WTC11 (cell line): ENCODE measurements at regions of chr12 and their contacts with region 1.

Region 1: GRCh38 chr12:54398995-54399793 is 14.7 kb upstream of the ZNF385A start:
- DNase-seq: peak; percentile 94
- ATAC-seq: peak; percentile 94
- H3K4me3 Mint-ChIP-seq: no peak overlapping the region
- H3K27ac Mint-ChIP-seq: no peak overlapping the region
- H3K4me1 Mint-ChIP-seq: peaks cover under 1% of the 10 kb centered on the region
- H3K27me3 Mint-ChIP-seq: peaks cover under 1% of the 10 kb centered on the region
- CTCF ChIP-seq: peak; percentile 99

Region 2: GRCh38 chr12:54187069-54187468 is 212.1 kb before region 1 on chr12:
- CTCF ChIA-PET with region 1: no interaction called
- POLR2A ChIA-PET with region 1: no interaction called
- DNase-seq: no peak
- ATAC-seq: no peak
- H3K4me3 Mint-ChIP-seq: peak overlapping the region; percentile 79
- H3K27ac Mint-ChIP-seq: no peak overlapping the region
- H3K4me1 Mint-ChIP-seq: peaks cover 14% of the 10 kb centered on the region
- H3K27me3 Mint-ChIP-seq: peaks cover 29% of the 10 kb centered on the region
- CTCF ChIP-seq: no peak

Region 3: DNA sequence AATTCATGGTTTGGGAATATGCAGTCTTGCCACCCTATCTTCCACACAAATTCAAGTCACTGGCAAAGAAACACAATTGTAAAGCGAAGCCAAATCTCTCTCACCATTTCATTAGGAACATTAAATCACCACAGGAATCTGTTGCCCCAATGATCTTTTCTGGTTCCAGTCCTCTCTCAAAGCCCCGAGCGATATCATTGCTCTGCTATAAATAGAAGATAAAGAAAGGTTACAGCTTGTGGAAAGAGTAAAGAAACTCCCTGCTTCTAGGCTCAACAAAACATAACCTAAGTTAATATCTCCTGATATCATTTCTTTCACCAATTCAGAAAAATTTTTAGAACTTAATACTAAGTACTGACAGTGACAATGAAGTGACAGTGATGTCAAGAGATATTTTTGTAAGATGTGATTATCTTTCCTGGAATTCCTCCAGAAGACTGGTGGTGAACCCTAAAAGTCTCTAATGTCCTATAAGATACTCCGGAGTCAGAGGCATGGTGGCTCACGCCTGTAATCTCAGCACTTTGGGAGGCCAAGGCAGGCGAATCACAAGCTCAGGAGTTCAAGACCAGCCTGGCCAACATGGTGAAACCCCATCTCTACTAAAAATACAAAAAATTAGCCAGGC is 153.1 kb before region 1 on chr12:
- CTCF ChIA-PET with region 1: no interaction called
- POLR2A ChIA-PET with region 1: no interaction called
- DNase-seq: no peak
- ATAC-seq: no peak
- H3K4me3 Mint-ChIP-seq: no peak overlapping the region
- H3K27ac Mint-ChIP-seq: no peak overlapping the region
- H3K4me1 Mint-ChIP-seq: no peaks in the 10 kb centered on the region
- H3K27me3 Mint-ChIP-seq: no peaks in the 10 kb centered on the region
- CTCF ChIP-seq: no peak

Region 4: GRCh38 chr12:54352022-54352531 is 47.1 kb before region 1 on chr12:
- CTCF ChIA-PET with region 1: interaction called, 13 read pairs
- POLR2A ChIA-PET with region 1: no interaction called
- DNase-seq: peak; percentile 70
- ATAC-seq: peak; percentile 55
- H3K4me3 Mint-ChIP-seq: peak overlapping the region; percentile 87
- H3K27ac Mint-ChIP-seq: peak overlapping the region; percentile 92
- H3K4me1 Mint-ChIP-seq: peaks cover 47% of the 10 kb centered on the region
- H3K27me3 Mint-ChIP-seq: peaks cover 18% of the 10 kb centered on the region
- CTCF ChIP-seq: no peak

Region 5: DNA sequence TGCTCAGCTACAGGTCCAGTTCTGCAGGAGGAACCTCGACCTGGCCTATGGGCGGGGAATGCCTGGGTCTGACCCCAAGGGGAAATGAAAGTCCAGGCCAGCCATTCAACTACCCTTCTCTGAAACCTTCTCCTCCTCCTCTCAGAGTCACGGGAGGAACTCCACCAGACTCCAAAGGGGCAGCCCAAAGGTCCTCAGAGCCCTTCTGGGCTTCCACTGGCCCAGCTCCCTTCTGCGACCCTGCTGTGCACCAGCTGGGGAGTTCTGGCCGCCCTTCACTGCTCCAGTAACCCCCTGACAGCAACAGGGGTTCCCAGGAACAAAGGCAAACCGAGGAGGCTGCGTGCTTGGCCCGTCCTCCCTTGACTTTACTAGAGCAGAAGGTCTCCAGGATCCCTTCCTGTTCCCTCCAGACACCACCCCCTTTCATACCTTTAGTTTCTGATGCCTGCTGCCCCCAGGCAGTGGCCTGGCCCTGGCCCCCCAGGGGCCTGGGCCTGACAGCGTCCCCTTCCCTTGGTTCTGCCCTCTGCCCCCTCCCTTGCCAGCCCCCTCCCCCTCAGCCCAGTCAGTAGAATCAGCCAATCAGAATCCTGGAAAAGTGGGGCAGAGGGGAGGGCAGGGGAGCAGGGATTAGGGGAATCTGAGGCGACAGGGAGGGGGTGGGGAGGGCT is 13.8 kb before region 1 on chr12:
- CTCF ChIA-PET with region 1: interaction called, 67 read pairs
- POLR2A ChIA-PET with region 1: interaction called, 4 read pairs
- DNase-seq: no peak
- ATAC-seq: peak; percentile 39
- H3K4me3 Mint-ChIP-seq: peak overlapping the region; percentile 47
- H3K27ac Mint-ChIP-seq: no peak overlapping the region
- H3K4me1 Mint-ChIP-seq: peaks cover 67% of the 10 kb centered on the region
- H3K27me3 Mint-ChIP-seq: no peaks in the 10 kb centered on the region
- CTCF ChIP-seq: no peak

Region 6: GRCh38 chr12:54431911-54432814 is 33.0 kb after region 1 on chr12:
- CTCF ChIA-PET with region 1: interaction called, 361 read pairs
- POLR2A ChIA-PET with region 1: interaction called, 4 read pairs
- DNase-seq: peak; percentile 60
- ATAC-seq: peak; percentile 63
- H3K4me3 Mint-ChIP-seq: peak overlapping the region; percentile 5; the same call in 1 of the 2 replicates
- H3K27ac Mint-ChIP-seq: no peak overlapping the region
- H3K4me1 Mint-ChIP-seq: peaks cover 43% of the 10 kb centered on the region
- H3K27me3 Mint-ChIP-seq: peaks cover 94% of the 10 kb centered on the region
- CTCF ChIP-seq: no peak

Region 7: DNA sequence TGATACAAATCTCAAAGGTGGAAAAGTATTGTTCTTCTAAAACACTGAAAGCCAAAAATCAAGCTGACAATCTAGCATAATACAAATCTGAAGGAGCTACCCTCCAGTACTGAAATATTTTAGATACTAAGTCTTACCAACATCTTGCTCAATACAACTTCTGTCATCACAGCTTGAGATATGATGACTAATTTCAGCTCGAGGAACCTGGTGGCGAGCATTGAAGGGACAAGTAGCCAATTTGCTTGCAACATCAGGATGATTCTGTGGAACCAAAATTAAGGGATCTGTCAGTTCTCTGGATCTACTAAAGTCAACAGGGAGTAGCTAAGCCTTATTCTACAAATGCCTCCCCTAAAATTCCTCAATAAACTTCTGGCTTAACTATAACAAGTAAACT is 63.8 kb after region 1 on chr12:
- CTCF ChIA-PET with region 1: interaction called, 12 read pairs
- POLR2A ChIA-PET with region 1: no interaction called
- DNase-seq: no peak
- ATAC-seq: no peak
- H3K4me3 Mint-ChIP-seq: no peak overlapping the region
- H3K27ac Mint-ChIP-seq: no peak overlapping the region
- H3K4me1 Mint-ChIP-seq: no peaks in the 10 kb centered on the region
- H3K27me3 Mint-ChIP-seq: peaks cover 81% of the 10 kb centered on the region
- CTCF ChIP-seq: no peak

Region 8: DNA sequence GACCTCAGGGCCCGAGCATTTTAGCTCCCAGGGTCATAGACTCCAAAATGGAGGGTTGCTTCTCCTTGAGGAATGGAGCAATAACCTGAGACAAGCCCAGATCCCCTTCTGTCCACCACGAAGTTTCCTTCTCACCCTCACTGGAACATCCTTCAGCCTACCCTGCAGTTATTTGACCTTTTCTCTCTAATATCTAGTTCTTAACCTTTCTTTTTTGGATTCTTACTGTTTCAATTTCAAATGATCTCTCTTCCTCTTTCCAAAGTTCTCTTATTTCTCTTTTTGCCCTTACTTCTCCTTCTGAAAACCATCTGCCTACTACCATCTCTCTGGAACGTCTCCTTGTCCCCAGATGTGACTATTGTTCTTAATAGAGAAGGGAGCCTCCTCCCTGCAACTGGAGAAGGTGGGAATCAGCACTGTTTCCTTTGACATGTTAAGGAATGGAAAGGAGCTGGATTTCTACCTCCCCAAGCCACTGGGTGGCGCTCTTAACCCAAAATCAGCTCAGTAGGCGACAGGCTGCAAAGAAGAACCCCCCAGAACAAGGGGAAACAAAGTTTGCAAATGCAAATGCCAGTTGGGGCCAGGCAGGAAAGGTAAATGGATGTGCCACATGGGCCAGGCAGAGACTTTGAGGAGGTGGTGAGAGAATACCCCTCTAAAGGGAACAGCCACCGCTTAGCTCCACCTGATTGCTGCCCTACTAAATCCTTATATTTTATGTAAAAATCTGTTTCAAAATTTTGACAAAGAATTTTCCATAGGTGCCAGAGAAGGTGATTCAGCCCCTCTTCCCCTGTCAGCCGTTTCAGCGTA is 127.8 kb after region 1 on chr12:
- CTCF ChIA-PET with region 1: interaction called, 32 read pairs
- POLR2A ChIA-PET with region 1: no interaction called
- DNase-seq: peak; percentile 92
- ATAC-seq: peak; percentile 92
- H3K4me3 Mint-ChIP-seq: no peak overlapping the region
- H3K27ac Mint-ChIP-seq: no peak overlapping the region
- H3K4me1 Mint-ChIP-seq: peaks cover 12% of the 10 kb centered on the region
- H3K27me3 Mint-ChIP-seq: peaks cover 63% of the 10 kb centered on the region
- CTCF ChIP-seq: peak; percentile 90